ENCODE measurements at regions of chr2 and their contacts with region 1.

Region 1: DNA sequence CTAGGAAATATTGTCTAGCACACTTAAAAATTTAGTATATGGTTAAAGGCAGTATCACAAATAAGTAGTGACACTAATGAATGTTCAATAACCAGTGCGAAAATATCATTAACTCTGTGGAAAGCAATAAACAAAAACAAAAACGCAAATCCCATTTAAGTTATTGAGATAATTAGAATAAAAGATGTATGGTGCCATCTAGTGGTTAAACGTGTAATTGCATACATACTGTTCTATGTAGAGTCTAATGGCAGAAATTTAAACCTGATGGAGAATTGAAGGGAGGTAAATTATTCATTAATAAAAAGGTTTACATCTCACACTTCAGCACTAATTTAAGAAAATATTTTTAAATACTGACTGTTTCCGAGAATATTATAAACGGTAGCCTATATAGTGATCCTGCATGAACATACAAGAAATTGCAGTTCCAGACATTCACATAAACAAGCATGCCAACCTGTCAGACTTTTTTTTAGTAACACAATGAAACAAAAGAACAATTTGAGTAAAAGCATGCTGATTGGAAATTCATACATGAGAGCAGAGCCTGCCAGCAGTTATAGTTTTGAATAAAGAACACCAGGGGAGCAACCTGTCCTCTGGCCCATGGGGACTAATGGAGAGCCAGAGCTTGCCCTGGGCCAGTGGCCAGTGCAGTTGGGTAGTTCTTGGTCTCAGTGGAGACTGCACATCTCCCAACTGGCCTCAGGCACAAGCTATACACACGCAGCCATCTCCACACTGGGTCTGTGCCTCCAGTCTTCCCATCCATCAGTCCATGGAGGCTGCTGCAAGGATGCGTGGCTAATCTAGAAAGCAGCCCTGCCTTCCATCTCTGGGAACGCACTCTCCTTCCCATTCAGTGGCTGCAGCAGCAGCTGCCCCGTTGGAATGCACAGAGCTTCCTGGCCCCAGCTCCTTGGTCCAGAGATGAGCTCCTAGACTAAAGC is 28.0 kb downstream of the GCG start:
- DNase-seq: no peak
- ATAC-seq: peak; percentile 61
- H3K4me3 Mint-ChIP-seq: no peak overlapping the region
- H3K27ac Mint-ChIP-seq: no peak overlapping the region
- H3K4me1 Mint-ChIP-seq: peaks cover 25% of the 10 kb centered on the region
- H3K27me3 Mint-ChIP-seq: no peaks in the 10 kb centered on the region

Region 2: DNA sequence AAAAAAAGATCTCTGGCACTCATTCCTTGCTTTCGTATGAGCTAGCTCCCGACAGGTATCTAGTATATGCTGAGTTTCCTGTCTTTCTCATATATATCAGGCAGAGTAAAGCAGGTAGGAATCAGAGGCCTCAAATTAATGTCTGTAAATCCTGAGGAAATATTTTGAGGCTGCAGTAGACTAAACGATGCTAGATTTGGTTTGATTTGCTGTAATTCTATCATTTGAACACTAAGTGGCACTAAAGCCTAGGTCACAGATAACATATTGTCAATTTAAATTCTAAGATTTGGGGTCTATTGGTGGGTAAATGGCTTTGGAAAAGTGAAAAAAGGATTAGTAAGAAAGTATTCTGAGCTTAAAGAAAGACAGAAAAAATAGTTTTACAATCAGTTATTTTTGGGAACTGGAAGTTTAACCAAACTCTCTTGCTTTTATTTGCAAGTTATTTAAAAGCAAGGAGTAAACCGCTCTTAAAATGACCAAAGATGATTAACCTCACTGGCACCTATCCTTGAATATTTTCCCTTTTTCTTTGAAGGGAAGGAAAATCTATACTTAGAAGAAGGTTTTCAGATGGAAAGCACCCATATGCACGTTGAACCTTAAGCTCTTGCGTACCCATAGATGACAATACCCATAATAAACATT is 537.4 kb before region 1 on chr2:
- CTCF ChIA-PET with region 1: interaction called, 25 read pairs
- DNase-seq: no peak
- ATAC-seq: no peak
- H3K4me3 Mint-ChIP-seq: no peak overlapping the region
- H3K27ac Mint-ChIP-seq: no peak overlapping the region
- H3K4me1 Mint-ChIP-seq: no peaks in the 10 kb centered on the region
- H3K27me3 Mint-ChIP-seq: peaks cover 20% of the 10 kb centered on the region

Region 3: DNA sequence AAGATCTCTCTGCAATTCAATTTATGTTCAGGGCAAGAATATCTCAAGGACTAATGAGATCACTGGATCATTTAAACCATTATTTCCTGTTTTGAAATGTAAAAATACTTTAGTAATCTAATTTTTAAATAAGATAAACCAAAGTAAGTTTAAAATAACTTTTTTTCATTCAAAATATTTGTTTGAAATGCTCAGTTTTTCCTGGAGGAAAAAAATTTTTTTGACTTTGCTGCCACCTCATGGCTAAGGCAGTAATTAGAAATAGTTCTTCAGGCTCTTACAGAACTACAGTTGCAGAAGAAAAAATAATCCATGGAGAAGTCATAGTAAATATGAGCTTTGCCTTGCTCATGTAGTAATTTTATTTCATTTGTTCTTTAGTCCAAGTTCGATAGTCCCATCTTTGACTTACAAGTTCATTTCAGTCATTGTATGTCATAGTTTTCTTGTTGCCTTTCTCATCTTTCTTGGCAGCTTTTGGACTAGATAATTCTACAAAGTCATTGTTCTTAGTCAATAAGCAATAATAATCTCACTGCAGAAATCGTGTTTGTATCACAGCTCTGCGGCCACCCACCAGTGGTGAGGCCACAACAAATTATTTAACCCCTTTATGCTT is 177.5 kb before region 1 on chr2:
- CTCF ChIA-PET with region 1: interaction called, 27 read pairs
- DNase-seq: no peak
- ATAC-seq: peak; percentile 64
- H3K4me3 Mint-ChIP-seq: no peak overlapping the region
- H3K27ac Mint-ChIP-seq: peak overlapping the region; percentile 49
- H3K4me1 Mint-ChIP-seq: peaks cover 43% of the 10 kb centered on the region
- H3K27me3 Mint-ChIP-seq: peaks cover 8% of the 10 kb centered on the region

Region 4: DNA sequence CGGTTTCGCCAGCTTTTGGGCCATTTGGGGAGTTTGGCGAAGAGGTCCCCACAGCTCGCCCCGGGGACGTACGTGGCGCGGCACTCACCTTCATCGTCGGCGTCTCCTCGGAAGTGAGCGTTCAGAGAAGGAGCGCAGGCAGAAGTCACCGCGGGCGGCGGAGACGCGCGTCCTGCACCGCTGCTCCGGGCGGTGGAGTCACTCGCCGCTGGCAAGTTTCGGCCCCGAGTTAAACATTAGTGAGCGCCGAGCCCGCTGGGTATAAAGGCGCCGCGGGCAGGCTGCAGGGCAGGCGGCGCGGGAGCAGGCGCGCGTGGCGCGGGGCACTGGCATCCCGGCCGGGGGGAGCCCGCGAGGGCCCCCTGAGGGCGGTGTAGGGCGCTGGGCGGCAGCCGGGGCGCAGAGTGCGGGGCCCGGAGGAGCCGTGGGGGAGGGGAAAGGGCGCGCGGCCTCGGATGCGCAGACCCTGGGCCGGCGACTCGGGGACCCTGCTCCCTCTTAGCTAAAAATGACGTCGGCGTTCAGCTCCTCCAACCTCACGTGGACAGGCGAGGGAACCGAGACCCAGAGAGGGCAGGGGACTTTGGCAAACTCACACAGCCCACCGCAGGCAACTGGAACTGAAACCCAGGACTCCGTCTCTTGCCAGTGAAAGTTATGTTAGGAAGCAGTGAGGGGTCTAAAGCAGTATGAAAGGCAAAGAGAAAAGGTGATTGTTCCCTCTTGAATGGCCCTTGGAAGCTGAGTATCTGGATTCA is 50.0 kb before region 1 on chr2 and contains the start of gene DPP4:
- CTCF ChIA-PET with region 1: interaction called, 13 read pairs
- DNase-seq: peak; percentile 69
- ATAC-seq: peak; percentile 84
- H3K4me3 Mint-ChIP-seq: peak within 1 kb of the TSS; percentile 95
- H3K27ac Mint-ChIP-seq: peak within 1 kb of the TSS; percentile 88
- H3K4me1 Mint-ChIP-seq: peaks cover 44% of the 10 kb centered on the region
- H3K27me3 Mint-ChIP-seq: no peaks in the 10 kb centered on the region
- total RNA-seq, gene DPP4: 106 to 115 TPM

Region 5: GRCh38 chr2:162430323-162430722 is 306.2 kb after region 1 on chr2:
- CTCF ChIA-PET with region 1: no interaction called
- DNase-seq: no peak
- ATAC-seq: no peak
- H3K4me3 Mint-ChIP-seq: no peak overlapping the region
- H3K27ac Mint-ChIP-seq: no peak overlapping the region
- H3K4me1 Mint-ChIP-seq: no peaks in the 10 kb centered on the region
- H3K27me3 Mint-ChIP-seq: peaks cover 2% of the 10 kb centered on the region